ENCODE measurements at regions of chr1 and their contacts with region 1.

Region 1: GRCh38 chr1:1890506-1891348 is at the start of gene GNB1:
- DNase-seq: peak; percentile 97
- H3K4me3 ChIP-seq: peak within 1 kb of the TSS; percentile 72 to 99 (median 96)
- H3K27ac ChIP-seq: peak within 1 kb of the TSS; percentile 90 to 99 (median 96)
- H3K4me1 ChIP-seq: peaks cover 54 to 88% (median 76%) of the 10 kb centered on the region in 6 donors
- H3K27me3 ChIP-seq: no peaks in the 10 kb centered on the region
- CTCF ChIP-seq: no peak
- POLR2A ChIP-seq: peak in 2 of 3 donors; percentile 49 to 75
- total RNA-seq, gene GNB1: 186 to 304 (median 273) TPM

Region 2: DNA sequence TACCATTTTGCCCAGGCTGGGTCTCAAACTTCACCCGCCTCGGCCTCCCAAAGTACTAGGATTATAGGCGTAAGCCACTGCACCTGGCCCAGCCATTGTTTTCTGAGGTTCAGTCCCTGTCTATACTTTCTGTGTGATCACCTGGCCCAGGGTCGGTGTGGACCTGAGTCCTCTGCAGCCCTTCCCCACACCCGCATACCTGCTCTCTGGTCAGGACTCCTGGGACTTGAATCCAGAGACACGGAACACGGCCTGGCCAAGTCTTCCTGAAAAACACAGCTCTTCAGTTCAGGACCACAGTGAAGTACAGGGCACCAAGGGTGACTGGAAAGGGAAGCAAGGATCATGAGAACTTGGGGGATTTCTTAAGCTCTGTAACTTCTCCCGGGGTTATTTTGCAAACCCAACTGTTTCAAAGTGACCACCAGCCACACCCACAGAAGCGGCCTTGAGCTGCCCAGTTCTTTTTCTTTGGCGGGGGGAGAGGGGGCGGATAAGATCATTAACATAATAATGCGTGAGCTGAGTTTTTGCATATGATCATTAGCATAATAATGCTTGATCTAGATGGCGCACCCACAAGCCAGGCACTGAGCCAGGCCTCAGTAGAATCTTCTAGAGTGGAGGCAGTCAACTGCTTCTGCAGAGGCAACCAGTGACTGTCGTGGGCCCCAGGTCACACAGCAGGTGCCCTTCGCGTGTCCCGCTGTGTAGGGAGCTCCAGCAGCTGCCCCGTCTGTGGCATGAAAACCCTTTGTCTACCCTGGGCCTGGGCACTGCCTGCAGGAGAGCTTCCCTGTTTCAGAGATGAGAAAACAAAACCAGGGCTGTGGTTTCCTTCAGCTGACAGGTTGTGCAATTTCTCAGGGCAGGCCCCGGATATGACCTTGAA is 110.8 kb before region 1 on chr1:
- intact Hi-C with region 1: loop called (anchors 10 kb)
- DNase-seq: peak; percentile 93
- H3K4me3 ChIP-seq: peak overlapping the region; percentile 64 to 97 (median 88)
- H3K27ac ChIP-seq: peak overlapping the region; percentile 90 to 99 (median 95)
- H3K4me1 ChIP-seq: peaks cover 69 to 96% (median 84%) of the 10 kb centered on the region in 6 donors
- H3K27me3 ChIP-seq: no peaks in the 10 kb centered on the region
- CTCF ChIP-seq: peak in 1 of 11 experiments; percentile 4
- POLR2A ChIP-seq: peak in 1 of 3 donors; percentile 11

Region 3: GRCh38 chr1:1799716-1800115 is 91.0 kb before region 1 on chr1:
- intact Hi-C with region 1: loop called (anchors 10 kb)
- DNase-seq: peak; percentile 32
- H3K4me3 ChIP-seq: no peak overlapping the region
- H3K27ac ChIP-seq: peak overlapping the region in 2 of 8 donors; percentile 14 to 33
- H3K4me1 ChIP-seq: peaks cover 2 to 75% (median 39%) of the 10 kb centered on the region in 6 donors
- H3K27me3 ChIP-seq: no peaks in the 10 kb centered on the region
- CTCF ChIP-seq: no peak
- POLR2A ChIP-seq: no peak

Measured in spleen (tissue), 13 donors.